ENCODE measurements at regions of chr12 and their contacts with region 1.

Region 1: DNA sequence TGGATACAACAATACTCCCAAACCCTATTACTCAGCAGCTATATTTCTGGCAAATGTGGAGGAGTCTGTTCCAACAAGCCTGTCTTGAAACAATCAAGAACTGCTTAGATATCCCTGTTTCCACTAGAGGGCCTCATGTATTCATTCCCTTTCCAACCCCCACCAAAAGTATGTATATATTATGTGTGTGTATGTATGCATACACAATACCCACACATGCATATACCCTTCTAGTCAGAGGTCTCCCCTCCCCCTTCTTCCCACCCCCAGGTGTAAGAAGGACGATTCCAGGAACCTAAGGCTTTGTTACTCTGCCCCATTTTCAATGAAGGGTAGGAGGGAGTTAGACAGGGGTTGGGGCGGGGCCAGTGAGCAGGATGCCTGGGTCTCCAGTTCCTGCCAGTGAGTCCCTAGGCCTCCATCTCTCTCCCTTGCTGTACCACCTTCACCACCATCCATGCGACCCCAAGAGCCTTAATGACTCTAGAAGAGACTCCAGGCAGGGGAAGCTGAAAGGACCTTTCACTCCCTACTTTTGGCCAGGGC is at the start of gene DGKA:
- DNase-seq: no peak
- ATAC-seq: peak in 1 of 4 donors; percentile 7
- H3K4me3 ChIP-seq: peak within 1 kb of the TSS; percentile 45 to 58 (median 52)
- H3K27ac ChIP-seq: peak within 1 kb of the TSS; percentile 45 to 62 (median 54)
- H3K4me1 ChIP-seq: peaks cover 0 to 16% (median 3%) of the 10 kb centered on the region in 4 donors
- H3K27me3 ChIP-seq: no peaks in the 10 kb centered on the region
- CTCF ChIP-seq: peak; percentile 46 to 51 (median 48)
- POLR2A ChIP-seq: no peak
- total RNA-seq, gene DGKA: 2.7 to 7.6 (median 4.9) TPM

Region 2: DNA sequence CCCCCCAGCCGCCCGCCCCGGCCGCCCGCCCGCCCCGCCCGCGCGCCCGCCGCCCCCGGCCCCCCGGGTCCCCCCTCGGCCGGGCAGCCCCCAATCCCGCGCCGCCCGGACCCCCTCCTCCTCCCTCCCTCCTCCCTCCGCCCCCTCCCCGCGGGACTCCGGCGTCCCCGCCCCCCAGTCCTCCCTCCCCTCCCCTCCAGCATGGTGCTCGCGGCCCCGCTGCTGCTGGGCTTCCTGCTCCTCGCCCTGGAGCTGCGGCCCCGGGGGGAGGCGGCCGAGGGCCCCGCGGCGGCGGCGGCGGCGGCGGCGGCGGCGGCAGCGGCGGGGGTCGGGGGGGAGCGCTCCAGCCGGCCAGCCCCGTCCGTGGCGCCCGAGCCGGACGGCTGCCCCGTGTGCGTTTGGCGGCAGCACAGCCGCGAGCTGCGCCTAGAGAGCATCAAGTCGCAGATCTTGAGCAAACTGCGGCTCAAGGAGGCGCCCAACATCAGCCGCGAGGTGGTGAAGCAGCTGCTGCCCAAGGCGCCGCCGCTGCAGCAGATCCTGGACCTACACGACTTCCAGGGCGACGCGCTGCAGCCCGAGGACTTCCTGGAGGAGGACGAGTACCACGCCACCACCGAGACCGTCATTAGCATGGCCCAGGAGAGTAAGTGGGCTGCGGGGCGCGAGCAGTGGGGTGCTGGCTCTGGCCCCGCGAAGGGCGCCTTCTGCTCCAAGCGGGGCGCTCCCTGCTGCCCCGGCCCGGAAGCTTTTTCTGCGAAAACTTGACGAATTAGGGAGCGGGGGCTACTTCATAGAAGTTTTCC is 187.5 kb before region 1 on chr12 and contains the start of gene GDF11:
- intact Hi-C with region 1: loop called (anchors 5 to 10 kb)
- DNase-seq: peak in 1 of 3 donors; percentile 49
- ATAC-seq: peak; percentile 19 to 39 (median 28)
- H3K4me3 ChIP-seq: peak within 1 kb of the TSS; percentile 32 to 52 (median 48)
- H3K27ac ChIP-seq: peak within 1 kb of the TSS in 1 of 3 donors; percentile 26
- H3K4me1 ChIP-seq: peaks cover 0 to 12% (median 0%) of the 10 kb centered on the region in 4 donors
- H3K27me3 ChIP-seq: no peaks in the 10 kb centered on the region
- CTCF ChIP-seq: no peak
- POLR2A ChIP-seq: no peak
- total RNA-seq, gene GDF11: 0.25 to 0.95 (median 0.54) TPM

Region 3: GRCh38 chr12:55771736-55772135 is 159.1 kb before region 1 on chr12:
- intact Hi-C with region 1: no loop called
- DNase-seq: no peak
- ATAC-seq: no peak
- H3K4me3 ChIP-seq: no peak overlapping the region
- H3K27ac ChIP-seq: no peak overlapping the region
- H3K4me1 ChIP-seq: no peaks in the 10 kb centered on the region
- H3K27me3 ChIP-seq: no peaks in the 10 kb centered on the region
- CTCF ChIP-seq: no peak
- POLR2A ChIP-seq: no peak

Region 4: GRCh38 chr12:55817346-55818139 is 113.3 kb before region 1 on chr12 and contains the starts of genes ORMDL2 and SARNP:
- intact Hi-C with region 1: loop called in 1 of 2 experiments (anchors 10 kb)
- DNase-seq: peak; percentile 96 to 98 (median 96)
- ATAC-seq: peak; percentile 95 to 99 (median 97)
- H3K4me3 ChIP-seq: peak within 1 kb of the TSS; percentile 58 to 70 (median 69)
- H3K27ac ChIP-seq: peak within 1 kb of the TSS; percentile 71 to 87 (median 76)
- H3K4me1 ChIP-seq: peaks cover 0 to 24% (median 8%) of the 10 kb centered on the region in 4 donors
- H3K27me3 ChIP-seq: no peaks in the 10 kb centered on the region
- CTCF ChIP-seq: no peak
- POLR2A ChIP-seq: peak; percentile 55
- total RNA-seq, gene ORMDL2: 20.2 to 35.4 (median 24.9) TPM
- total RNA-seq, gene SARNP: 11.3 to 22.3 (median 17.0) TPM

Region 5: DNA sequence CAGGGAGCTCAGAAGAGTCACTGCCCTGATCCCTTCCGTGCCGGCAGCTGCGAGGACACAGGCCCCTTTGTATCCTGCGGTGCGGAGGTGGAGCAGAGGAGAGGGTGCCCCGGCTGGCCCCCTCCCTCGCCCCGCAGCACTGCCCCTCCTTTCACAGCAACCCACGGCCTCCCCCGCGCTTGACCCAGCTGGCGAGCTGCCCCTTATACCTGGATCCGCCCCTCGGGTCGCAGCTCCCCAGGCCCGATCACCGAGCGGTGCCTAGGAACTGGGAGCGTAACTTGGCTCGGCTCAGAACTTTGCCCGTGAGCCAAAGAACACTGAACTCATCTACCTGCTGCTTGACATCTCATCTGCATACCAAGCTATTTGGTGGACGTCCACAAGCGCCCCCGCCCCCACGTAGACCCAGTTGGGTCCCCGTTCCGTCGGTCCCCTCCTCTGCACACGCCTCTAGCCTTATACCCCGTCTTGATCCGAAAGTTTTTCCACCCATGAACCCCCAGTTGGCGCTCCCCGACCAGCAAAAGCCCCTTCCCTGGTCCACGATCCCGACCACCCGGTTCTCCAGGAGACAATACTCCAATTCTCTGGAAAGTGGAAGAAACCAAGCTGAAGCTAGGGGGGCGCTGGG is 100.8 kb before region 1 on chr12:
- intact Hi-C with region 1: loop called in 1 of 2 experiments (anchors 10 kb)
- DNase-seq: peak; percentile 58 to 80 (median 79)
- ATAC-seq: peak; percentile 26 to 57 (median 45)
- H3K4me3 ChIP-seq: peak overlapping the region; percentile 79 to 95 (median 89)
- H3K27ac ChIP-seq: peak overlapping the region; percentile 56 to 89 (median 88)
- H3K4me1 ChIP-seq: peaks cover 0 to 23% (median 2%) of the 10 kb centered on the region in 4 donors
- H3K27me3 ChIP-seq: no peaks in the 10 kb centered on the region
- CTCF ChIP-seq: no peak
- POLR2A ChIP-seq: peak; percentile 18

Region 6: GRCh38 chr12:56160141-56160763 is 229.4 kb after region 1 on chr12:
- intact Hi-C with region 1: no loop called
- DNase-seq: no peak
- ATAC-seq: peak in 3 of 4 donors; percentile 3 to 21 (median 7)
- H3K4me3 ChIP-seq: peak overlapping the region; percentile 66 to 87 (median 85)
- H3K27ac ChIP-seq: peak overlapping the region; percentile 89 to 98 (median 97)
- H3K4me1 ChIP-seq: peaks cover 0 to 34% (median 6%) of the 10 kb centered on the region in 4 donors
- H3K27me3 ChIP-seq: no peaks in the 10 kb centered on the region
- CTCF ChIP-seq: no peak
- POLR2A ChIP-seq: no peak